HAP-1 (cell line): ENCODE measurements at regions of chr11 and their contacts with region 1.

Region 1: GRCh38 chr11:4493480-4493818 is 11.0 kb downstream of the OR52K1 start:
- DNase-seq: no peak
- H3K4me3 ChIP-seq: no peak overlapping the region
- H3K4me1 ChIP-seq: no peaks in the 10 kb centered on the region
- H3K27me3 ChIP-seq: peaks cover 7% of the 10 kb centered on the region

Region 2: GRCh38 chr11:4181782-4182721 is 311.4 kb before region 1 on chr11:
- in situ Hi-C with region 1: loop called (anchors 5 kb)
- DNase-seq: peak; percentile 38 to 78
- H3K4me3 ChIP-seq: no peak overlapping the region
- H3K4me1 ChIP-seq: no peaks in the 10 kb centered on the region
- H3K27me3 ChIP-seq: no peaks in the 10 kb centered on the region